Dendritic cell treated with granulocyte-macrophage colony-stimulating factor and Interleukin-4, amounts not matched to agents 40 ng/mL and 50 ng/mL, for 4 days (primary cell): ENCODE measurements at regions of chr7 and their contacts with region 1.

Region 1: GRCh38 chr7:64313740-64314491 is at the start of gene ZNF736:
- H3K4me3 Mint-ChIP-seq: peak within 1 kb of the TSS; percentile 96
- H3K27ac Mint-ChIP-seq: peak within 1 kb of the TSS; percentile 96
- H3K4me1 Mint-ChIP-seq: peaks cover 11% of the 10 kb centered on the region
- H3K27me3 Mint-ChIP-seq: no peaks in the 10 kb centered on the region

Region 2: GRCh38 chr7:64371106-64371505 is 57.2 kb after region 1 on chr7:
- intact Hi-C with region 1: no loop called
- H3K4me3 Mint-ChIP-seq: no peak overlapping the region
- H3K27ac Mint-ChIP-seq: no peak overlapping the region
- H3K4me1 Mint-ChIP-seq: no peaks in the 10 kb centered on the region
- H3K27me3 Mint-ChIP-seq: no peaks in the 10 kb centered on the region

Region 3: GRCh38 chr7:64794171-64794844 is 480.4 kb after region 1 on chr7 and contains the start of gene ZNF138:
- intact Hi-C with region 1: loop called (anchors 10 kb)
- H3K4me3 Mint-ChIP-seq: peak within 1 kb of the TSS; percentile 98
- H3K27ac Mint-ChIP-seq: peak within 1 kb of the TSS; percentile 96
- H3K4me1 Mint-ChIP-seq: peaks cover 16% of the 10 kb centered on the region
- H3K27me3 Mint-ChIP-seq: no peaks in the 10 kb centered on the region

Region 4: GRCh38 chr7:64978497-64979203 is 664.7 kb after region 1 on chr7:
- intact Hi-C with region 1: no loop called
- H3K4me3 Mint-ChIP-seq: no peak overlapping the region
- H3K27ac Mint-ChIP-seq: no peak overlapping the region
- H3K4me1 Mint-ChIP-seq: no peaks in the 10 kb centered on the region
- H3K27me3 Mint-ChIP-seq: no peaks in the 10 kb centered on the region

Region 5: GRCh38 chr7:65006094-65006992 is 692.4 kb after region 1 on chr7 and contains the start of gene ERV3-1:
- intact Hi-C with region 1: loop called (anchors 10 kb)
- H3K4me3 Mint-ChIP-seq: peak within 1 kb of the TSS; percentile 96
- H3K27ac Mint-ChIP-seq: peak within 1 kb of the TSS; percentile 98
- H3K4me1 Mint-ChIP-seq: peaks cover 36% of the 10 kb centered on the region
- H3K27me3 Mint-ChIP-seq: no peaks in the 10 kb centered on the region

Region 6: DNA sequence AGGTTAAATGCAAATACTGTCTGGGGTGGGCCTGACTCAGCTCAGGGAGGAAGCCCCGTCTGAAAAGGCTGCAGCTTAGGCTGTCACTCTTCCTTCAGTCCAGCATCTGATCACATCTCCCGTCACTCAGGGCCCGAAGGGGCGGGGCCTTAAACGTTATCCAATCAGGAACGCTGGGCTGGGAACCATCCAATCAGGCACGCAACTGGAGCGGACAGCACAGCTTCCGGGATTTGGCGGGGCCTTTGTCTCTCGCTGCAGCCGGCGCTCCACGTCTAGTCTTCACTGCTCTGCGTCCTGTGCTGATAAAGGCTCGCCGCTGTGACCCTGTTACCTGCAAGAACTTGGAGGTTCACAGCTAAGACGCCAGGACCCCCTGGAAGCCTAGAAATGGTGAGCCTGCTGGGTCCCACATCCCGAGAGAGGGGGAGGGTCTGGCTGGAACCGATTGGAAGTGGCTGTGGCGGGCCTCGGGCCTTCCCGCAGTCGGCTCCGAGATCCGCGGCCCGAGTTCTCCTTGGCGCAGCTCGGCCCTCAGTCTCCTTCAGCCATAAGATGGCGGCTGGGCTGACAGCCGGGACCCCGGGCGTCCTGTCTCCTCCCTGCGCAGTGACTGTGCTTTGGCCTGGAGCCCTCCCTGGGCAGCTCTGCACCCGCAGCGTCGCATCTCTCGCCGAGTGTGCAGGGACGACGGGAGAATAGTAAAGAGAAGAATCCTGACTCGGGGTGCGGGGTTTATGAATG is 1059.9 kb after region 1 on chr7 and contains the start of gene ZNF92:
- intact Hi-C with region 1: loop called (anchors 10 kb)
- H3K4me3 Mint-ChIP-seq: peak within 1 kb of the TSS; percentile 91
- H3K27ac Mint-ChIP-seq: peak within 1 kb of the TSS; percentile 95
- H3K4me1 Mint-ChIP-seq: peaks cover 16% of the 10 kb centered on the region
- H3K27me3 Mint-ChIP-seq: no peaks in the 10 kb centered on the region